ENCODE measurements at regions of chr14 and their contacts with region 1.

Region 1: DNA sequence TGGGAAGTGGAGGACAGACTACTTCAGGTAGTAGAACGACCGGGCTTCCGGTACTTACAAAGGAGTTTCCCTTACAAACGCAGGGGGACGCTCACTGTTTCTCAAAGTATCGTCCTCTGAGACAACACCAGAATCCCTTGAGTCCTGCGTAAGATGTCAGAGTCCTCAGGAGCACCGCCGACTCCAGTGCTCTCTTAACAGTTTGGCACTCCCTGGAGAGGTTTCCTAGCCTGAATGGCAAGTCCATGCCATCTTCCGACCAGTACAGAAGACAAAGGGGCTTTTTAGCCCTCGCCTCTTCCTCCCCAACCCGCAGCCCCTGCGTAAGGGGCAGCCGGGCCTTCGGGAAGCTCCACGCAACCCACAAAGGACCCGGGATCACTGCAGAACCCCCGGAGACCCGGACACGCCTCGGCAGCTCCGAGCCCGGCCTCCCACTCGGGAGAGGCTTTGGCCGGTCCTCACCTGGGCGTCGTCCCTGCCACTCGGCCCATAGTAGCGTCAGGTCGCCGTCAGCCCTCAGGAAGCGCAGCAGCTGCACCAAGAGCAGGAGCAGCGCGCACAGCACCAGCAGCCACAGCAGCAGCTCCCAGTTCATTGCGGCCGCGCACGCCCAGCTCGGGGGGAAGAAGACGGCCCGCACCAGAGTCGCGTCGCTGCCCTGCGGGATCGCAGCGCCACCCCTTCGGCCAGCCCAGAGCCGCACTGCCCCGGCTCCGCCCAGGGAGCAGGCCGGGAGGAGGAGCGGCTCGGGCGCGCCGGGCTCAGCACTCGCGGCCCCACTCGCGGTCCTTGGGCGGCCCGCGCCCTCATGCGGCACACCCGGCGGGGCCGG is at the start of gene DHRS7:
- DNase-seq: peak; percentile 69 to 82
- H3K4me3 ChIP-seq: peak within 1 kb of the TSS; percentile 74
- H3K4me1 ChIP-seq: peaks cover 13% of the 10 kb centered on the region
- H3K27me3 ChIP-seq: no peaks in the 10 kb centered on the region

Region 2: DNA sequence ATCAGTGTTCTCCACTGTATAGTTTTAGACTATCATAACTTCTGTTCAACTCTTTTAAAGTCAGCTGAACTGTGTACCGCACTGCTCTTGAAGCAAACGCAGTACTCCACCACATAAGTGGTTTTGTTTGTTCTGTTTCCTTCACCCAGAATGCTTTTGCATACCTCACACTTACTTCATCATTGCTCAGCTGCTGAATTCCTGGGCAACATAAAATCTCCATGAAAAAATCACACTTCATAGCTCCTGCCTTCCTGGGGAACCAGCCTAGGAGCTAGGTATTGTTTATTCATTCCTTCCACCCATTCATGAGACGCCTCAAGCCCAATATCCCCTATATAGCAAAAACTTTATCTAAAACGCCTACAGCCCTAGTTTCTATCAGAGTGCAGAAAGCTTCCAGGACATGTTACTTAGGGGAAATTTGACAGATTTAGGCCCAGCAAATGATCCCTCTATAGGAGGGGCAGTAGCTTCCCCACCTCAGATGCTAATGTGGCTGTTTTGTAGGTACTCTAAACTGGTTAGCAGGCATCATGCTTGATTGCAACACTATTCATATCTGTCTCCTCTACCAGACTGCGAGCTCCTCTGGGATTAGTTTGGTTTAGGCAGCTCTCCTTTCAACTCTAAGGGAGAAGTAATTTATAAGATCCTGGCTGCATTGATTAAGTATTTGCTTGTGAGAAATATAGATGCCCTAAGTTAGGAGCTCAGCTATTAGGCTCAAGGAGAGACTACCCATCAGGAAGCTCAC is 200.5 kb before region 1 on chr14:
- in situ Hi-C with region 1: loop called (anchors 10 kb)
- DNase-seq: no peak
- H3K4me3 ChIP-seq: no peak overlapping the region
- H3K4me1 ChIP-seq: no peaks in the 10 kb centered on the region
- H3K27me3 ChIP-seq: peaks cover 14% of the 10 kb centered on the region; the same call in 1 of the 2 replicates

Region 3: DNA sequence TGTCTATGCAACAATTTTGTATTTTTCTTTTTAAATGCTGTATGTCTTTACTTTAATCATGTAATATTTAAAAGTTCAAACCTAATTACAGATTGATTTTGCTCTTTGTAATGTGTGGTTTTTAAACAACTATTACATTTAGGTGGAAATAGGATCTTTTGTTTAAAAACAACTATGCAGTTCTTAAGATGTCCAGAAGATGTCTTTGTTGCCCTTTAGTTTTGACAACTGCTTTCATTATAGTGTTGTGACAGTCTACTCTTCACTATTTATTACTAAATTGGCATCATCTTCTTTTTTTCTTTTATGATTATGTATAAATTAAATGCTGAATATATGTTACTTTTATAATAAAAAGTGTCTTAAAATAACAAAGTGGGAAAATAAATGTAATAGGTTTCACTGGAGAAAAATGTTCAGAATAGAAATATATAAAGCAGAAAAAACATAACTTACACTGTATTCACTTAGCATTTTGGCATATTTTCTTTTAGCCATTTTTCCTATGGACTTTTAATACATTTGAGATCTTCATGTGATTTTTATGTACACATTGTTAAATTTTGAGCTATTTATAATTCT is 100.3 kb before region 1 on chr14:
- in situ Hi-C with region 1: loop called (anchors 10 kb)
- DNase-seq: peak in 1 of 2 experiments; percentile 58
- H3K4me3 ChIP-seq: no peak overlapping the region
- H3K4me1 ChIP-seq: peaks cover 17% of the 10 kb centered on the region
- H3K27me3 ChIP-seq: 0 out of 2 replicates have a peak, but pooled peaks cover 6% of the 10 kb centered on the region

Region 4: DNA sequence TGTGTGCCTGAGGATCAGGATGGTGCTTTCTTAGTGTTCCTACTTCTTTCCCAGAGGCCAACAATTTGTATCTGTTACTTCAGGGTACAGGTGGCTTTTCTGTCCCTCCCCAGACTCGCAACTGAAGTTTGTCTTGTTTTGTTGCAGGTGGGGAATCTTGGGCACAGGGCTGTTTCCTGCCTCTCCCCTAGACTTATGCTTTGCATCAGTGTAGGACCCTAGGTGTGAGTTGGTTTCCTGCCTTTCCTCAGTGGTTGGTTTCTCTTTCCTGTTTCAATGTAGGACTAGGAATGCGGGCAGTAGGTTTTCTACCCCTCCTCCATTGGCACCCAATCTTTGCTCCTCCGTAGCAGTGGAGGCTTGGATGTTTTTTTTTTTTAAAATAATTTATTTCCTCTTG is 729.0 kb after region 1 on chr14:
- in situ Hi-C with region 1: no loop called
- DNase-seq: no peak
- H3K4me3 ChIP-seq: no peak overlapping the region
- H3K4me1 ChIP-seq: peaks cover 11% of the 10 kb centered on the region
- H3K27me3 ChIP-seq: no peaks in the 10 kb centered on the region